ENCODE measurements at regions of chr2 and their contacts with region 1.

Region 1: DNA sequence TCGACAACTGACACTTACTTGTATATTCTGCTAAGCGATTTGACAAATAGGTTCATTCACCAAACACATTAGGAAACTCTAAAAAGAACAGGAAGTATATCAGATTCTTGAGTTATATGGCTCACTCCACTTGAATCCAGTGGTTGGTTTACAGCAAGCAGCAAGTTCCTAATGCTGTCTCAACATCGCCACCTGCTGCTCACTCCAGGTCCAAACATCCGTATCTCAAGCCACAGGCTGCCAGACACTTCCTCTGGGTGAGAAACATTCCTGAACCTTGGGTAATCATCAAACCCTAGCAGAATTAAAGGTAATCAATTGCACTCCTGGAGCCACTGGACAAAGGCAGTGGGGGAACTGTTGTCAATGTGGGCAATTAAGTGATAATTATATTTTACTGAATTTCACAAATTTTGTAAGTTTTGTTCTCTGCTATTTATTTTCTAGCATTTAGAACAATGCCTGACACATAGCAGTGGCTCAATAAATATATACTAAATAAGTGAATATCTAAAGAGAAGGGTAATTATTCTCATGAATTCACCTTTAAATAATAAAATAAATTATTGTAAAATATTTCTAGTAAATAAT is 107.1 kb upstream of the TTN start:
- DNase-seq: peak; percentile 78
- H3K4me3 ChIP-seq: no peak overlapping the region
- H3K27ac ChIP-seq: no peak overlapping the region
- H3K4me1 ChIP-seq: no peaks in the 10 kb centered on the region
- H3K27me3 ChIP-seq: no peaks in the 10 kb centered on the region
- CTCF ChIP-seq: peak; percentile 49 to 87 (median 76)
- POLR2A ChIP-seq: no peak

Region 2: DNA sequence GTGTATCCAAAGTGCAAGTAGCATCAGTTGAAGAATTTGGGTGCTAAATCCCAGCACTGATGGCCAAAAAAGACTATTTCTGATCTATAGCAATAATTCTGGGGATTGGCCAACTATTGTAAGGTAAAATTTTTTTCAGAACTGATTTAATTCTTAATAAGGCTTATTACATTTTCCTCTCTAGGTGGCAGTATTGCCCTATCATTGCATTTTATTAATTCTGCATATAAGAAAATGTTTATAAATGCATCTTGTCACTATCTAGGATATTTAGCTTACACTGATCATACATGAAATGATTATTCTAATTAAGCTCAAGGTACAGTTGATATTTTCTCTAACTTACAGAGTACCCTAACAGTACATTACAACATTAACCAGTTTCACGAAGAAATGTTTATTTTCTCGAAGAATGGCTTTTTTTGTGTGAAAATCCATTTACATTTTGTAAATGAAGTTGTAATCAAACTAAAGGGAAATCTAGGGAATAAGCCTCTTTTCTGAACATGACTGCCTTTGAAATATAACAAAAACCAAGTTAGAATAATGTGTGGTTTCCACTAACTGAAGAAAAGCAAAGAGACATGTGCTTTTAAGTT is 118.2 kb before region 1 on chr2:
- intact Hi-C with region 1: loop called (anchors 5 kb)
- DNase-seq: no peak
- H3K4me3 ChIP-seq: no peak overlapping the region
- H3K27ac ChIP-seq: no peak overlapping the region
- H3K4me1 ChIP-seq: no peaks in the 10 kb centered on the region
- H3K27me3 ChIP-seq: no peaks in the 10 kb centered on the region
- CTCF ChIP-seq: peak in 3 of 4 experiments; percentile 47 to 57 (median 56)
- POLR2A ChIP-seq: no peak

Region 3: DNA sequence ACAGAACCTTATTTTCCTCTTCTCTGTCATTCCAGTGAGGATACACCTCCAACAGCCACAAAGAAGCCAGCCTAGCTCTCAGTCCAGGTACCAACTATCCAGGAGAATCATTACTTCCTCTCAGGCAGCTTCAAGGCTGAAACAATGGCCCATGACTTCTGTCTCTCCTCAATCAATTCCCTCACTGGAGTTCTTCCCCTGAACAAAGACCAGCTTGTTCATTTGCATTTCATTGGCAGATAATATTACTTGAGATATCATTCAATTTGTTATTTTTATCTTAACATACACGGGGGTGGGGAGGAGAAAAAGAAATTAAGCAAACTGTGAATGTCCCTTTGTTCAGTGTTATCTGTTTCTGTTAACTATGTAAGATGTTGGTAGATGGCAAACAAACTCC is 91.6 kb after region 1 on chr2:
- intact Hi-C with region 1: no loop called
- DNase-seq: no peak
- H3K4me3 ChIP-seq: no peak overlapping the region
- H3K27ac ChIP-seq: no peak overlapping the region
- H3K4me1 ChIP-seq: no peaks in the 10 kb centered on the region
- H3K27me3 ChIP-seq: no peaks in the 10 kb centered on the region
- CTCF ChIP-seq: no peak
- POLR2A ChIP-seq: no peak

Region 4: GRCh38 chr2:179096090-179096489 is 181.7 kb after region 1 on chr2:
- intact Hi-C with region 1: no loop called
- DNase-seq: no peak
- H3K4me3 ChIP-seq: no peak overlapping the region
- H3K27ac ChIP-seq: no peak overlapping the region
- H3K4me1 ChIP-seq: no peaks in the 10 kb centered on the region
- H3K27me3 ChIP-seq: no peaks in the 10 kb centered on the region
- CTCF ChIP-seq: no peak
- POLR2A ChIP-seq: no peak

Measured in prostate gland (tissue), 2 donors.